ENCODE measurements at regions of chr1 and their contacts with region 1.

Region 1: DNA sequence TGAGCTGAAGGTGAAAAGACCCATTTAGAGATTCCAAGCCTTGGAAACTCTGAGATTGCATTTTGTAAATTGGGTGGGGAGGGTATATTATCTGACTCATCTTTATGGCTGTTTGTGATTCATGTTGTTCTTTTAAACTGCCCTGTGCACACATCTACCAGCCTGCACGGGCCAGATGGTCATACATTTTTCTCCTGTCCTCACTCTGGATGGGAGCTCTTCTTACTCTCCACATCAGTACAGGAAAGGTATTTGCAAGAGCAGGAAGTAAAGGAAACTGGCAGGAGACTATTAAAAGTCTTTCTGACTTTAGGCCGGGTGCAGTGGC is 14.3 kb upstream of the NMNAT2 start:
- DNase-seq: no peak
- H3K4me3 Mint-ChIP-seq: no peak overlapping the region
- H3K27ac Mint-ChIP-seq: no peak overlapping the region
- H3K4me1 Mint-ChIP-seq: peaks cover 5% of the 10 kb centered on the region
- H3K27me3 Mint-ChIP-seq: no peaks in the 10 kb centered on the region
- CTCF ChIP-seq: no peak

Region 2: GRCh38 chr1:183385340-183386144 is 47.0 kb before region 1 on chr1:
- CTCF ChIA-PET with region 1: no interaction called
- intact Hi-C with region 1: loop called (anchors 1 kb)
- DNase-seq: no peak
- H3K4me3 Mint-ChIP-seq: no peak overlapping the region
- H3K27ac Mint-ChIP-seq: no peak overlapping the region
- H3K4me1 Mint-ChIP-seq: no peaks in the 10 kb centered on the region
- H3K27me3 Mint-ChIP-seq: no peaks in the 10 kb centered on the region
- CTCF ChIP-seq: no peak

Region 3: GRCh38 chr1:183783767-183784637 is 351.5 kb after region 1 on chr1:
- CTCF ChIA-PET with region 1: no interaction called
- intact Hi-C with region 1: no loop called
- DNase-seq: peak; percentile 5
- H3K4me3 Mint-ChIP-seq: no peak overlapping the region
- H3K27ac Mint-ChIP-seq: no peak overlapping the region
- H3K4me1 Mint-ChIP-seq: peaks cover 10% of the 10 kb centered on the region
- H3K27me3 Mint-ChIP-seq: no peaks in the 10 kb centered on the region
- CTCF ChIP-seq: no peak

Measured in Calu3 (cell line).